Activated CD8-positive, alpha-beta T cell treated with anti-CD3 and anti-CD28 coated beads for 36 hours (primary cell): ENCODE measurements at regions of chr15 and their contacts with region 1.

Region 1: DNA sequence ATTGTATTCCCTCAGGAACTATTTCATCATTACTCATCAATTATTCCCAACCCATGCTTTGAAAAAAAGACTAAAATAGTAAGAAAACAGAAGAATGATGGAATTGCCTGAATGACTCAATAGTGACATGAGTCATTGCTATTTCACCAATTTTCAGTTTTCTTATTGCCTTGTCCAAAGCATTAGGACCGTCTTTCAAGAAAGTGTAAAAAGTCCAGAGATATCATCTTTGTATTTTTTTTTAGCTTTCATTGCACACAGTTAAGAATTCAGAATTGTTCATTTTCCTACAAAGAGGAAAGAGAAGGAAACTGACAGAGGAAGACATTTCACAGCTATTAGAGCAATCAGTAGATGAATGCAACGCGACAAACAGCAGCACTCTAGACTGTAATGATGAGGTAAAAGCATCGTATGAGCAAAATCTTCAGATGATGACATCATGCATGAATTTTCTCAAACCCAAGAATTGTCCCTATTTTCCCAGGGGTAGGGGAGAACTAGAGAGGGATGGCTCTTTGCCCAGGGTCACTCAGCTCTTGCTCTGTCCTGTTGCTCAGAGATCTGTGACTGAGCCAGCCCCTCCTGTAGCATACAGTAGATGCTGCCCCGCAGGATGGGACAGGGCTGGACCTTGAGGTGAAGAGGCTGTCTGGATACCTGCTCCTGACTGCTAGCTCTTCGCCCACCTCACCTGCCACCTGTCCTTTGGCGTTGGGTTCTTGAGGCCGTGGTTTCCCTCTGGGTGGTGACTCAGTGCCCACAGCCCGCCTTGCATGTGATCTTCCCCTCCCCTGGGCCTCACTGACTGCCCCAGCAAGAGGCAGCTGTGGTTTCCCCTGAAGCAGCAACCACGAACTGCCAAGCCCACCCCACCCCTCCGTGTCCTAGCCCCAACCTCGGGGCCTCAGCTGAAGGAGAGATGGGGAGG is 84.8 kb downstream of the PPCDC start:
- DNase-seq: peak; percentile 92
- ATAC-seq: peak; percentile 86
- H3K4me3 Mint-ChIP-seq: no peak overlapping the region
- H3K27ac Mint-ChIP-seq: peak overlapping the region; percentile 80
- H3K4me1 Mint-ChIP-seq: peaks cover 41% of the 10 kb centered on the region
- H3K27me3 Mint-ChIP-seq: peaks cover 23% of the 10 kb centered on the region
- CTCF ChIP-seq: no peak

Region 2: GRCh38 chr15:75091814-75092213 is 16.4 kb before region 1 on chr15:
- CTCF ChIA-PET with region 1: interaction called, 3 read pairs
- POLR2A ChIA-PET with region 1: interaction called, 11 read pairs
- intact Hi-C with region 1: no loop called
- DNase-seq: peak; percentile 24
- ATAC-seq: peak; percentile 92
- H3K4me3 Mint-ChIP-seq: no peak overlapping the region
- H3K27ac Mint-ChIP-seq: no peak overlapping the region
- H3K4me1 Mint-ChIP-seq: peaks cover 29% of the 10 kb centered on the region
- H3K27me3 Mint-ChIP-seq: peaks cover 12% of the 10 kb centered on the region
- CTCF ChIP-seq: no peak

Region 3: GRCh38 chr15:75130597-75131268 is 22.6 kb after region 1 on chr15:
- CTCF ChIA-PET with region 1: interaction called, 10 read pairs
- POLR2A ChIA-PET with region 1: no interaction called
- intact Hi-C with region 1: no loop called
- DNase-seq: peak; percentile 42
- ATAC-seq: peak; percentile 99
- H3K4me3 Mint-ChIP-seq: peak overlapping the region; percentile 28
- H3K27ac Mint-ChIP-seq: peak overlapping the region; percentile 11
- H3K4me1 Mint-ChIP-seq: peaks cover 16% of the 10 kb centered on the region
- H3K27me3 Mint-ChIP-seq: peaks cover 7% of the 10 kb centered on the region
- CTCF ChIP-seq: no peak

Region 4: DNA sequence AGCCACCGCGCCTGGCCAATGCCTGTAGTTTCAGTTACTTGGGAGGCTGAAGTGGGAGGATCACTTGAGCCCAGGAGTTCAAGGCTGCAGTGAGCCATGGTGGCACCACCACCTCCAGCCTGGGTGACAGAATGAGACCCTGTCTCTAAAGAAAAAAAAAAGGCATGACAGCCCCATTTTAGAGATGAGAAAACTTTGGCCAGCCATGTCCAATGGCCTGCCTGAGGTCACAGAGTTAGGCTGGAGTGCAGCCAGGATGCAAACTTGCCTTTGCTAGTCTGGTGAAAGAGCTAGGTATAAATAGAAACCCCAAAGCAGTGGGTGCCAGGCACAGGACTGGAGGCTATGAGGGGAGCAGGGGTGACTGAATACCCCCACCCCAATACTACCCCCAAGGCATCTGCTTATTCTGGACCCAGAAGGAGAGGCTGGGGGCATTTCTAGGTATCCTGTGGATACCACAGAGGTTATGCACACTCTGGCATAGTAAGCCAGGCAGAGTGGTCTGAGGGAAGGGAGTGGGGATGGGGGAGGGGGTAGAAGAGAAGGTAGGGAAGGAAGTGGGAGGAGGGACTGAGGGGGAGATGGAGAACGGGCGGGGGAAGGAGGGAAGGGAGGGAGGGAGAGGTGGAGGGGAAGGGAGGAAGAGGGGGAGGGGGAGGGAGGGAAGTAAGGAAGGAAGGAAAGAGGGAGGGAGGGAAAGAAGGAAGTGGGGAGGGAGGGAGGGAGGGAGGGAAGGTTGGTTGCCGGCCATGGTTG is 77.3 kb after region 1 on chr15:
- CTCF ChIA-PET with region 1: no interaction called
- POLR2A ChIA-PET with region 1: no interaction called
- intact Hi-C with region 1: no loop called
- DNase-seq: no peak
- ATAC-seq: no peak
- H3K4me3 Mint-ChIP-seq: no peak overlapping the region
- H3K27ac Mint-ChIP-seq: no peak overlapping the region
- H3K4me1 Mint-ChIP-seq: peaks cover 5% of the 10 kb centered on the region
- H3K27me3 Mint-ChIP-seq: peaks cover 16% of the 10 kb centered on the region
- CTCF ChIP-seq: no peak